HepG2 (cell line): ENCODE measurements at regions of chr9 and their contacts with region 1.

Region 1: DNA sequence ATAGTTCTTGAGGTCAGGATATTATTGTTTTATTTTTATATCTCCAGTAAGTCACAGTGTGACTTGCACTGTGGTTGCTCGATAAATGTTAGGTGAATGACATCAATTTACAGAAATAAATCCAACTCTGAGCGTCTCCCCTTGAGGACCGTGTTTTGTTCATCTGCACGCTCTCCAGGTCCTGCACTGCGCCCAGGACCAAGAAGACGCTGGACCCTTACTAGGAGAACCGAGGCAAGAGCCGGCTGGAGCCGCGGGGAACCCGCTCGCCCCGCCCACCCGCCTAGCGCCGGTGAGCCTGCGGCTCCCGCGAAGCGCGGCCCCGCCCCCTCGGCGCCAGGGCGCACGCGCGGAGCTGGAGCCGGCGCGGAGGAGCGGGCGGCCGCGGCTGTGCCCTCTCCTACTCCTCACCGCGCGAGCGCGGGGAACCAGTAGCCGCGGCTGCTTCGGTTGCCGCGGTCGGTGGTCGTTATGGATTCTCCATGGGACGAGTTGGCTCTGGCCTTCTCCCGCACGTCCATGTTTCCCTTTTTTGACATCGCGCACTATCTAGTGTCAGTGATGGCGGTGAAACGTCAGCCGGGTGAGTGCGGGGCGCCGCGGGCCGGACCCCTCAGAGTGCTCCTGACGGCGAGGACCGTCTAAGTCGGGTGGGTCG is at the start of gene TMEM38B:
- DNase-seq: peak; percentile 50
- ATAC-seq: peak; percentile 93
- H3K4me3 ChIP-seq: peak within 1 kb of the TSS; percentile 77 to 92 (median 82)
- H3K27ac ChIP-seq: peak within 1 kb of the TSS; percentile 43
- H3K4me1 ChIP-seq: peaks cover 31% of the 10 kb centered on the region
- H3K27me3 ChIP-seq: no peaks in the 10 kb centered on the region; a peak in 1 of 5 replicates
- CTCF ChIP-seq: no peak
- EP300 ChIP-seq: no peak
- POLR2A ChIP-seq: peak; percentile 55 to 74; a peak in 3 of 4 replicates
- RAD21 ChIP-seq: no peak
- total RNA-seq, gene TMEM38B: 26.0 and 32.4 TPM in 2 replicates

Region 2: GRCh38 chr9:105656131-105656921 is 38.0 kb before region 1 on chr9:
- CTCF ChIA-PET with region 1: no interaction called
- POLR2A ChIA-PET with region 1: no interaction called
- in situ Hi-C with region 1: no loop called
- intact Hi-C with region 1: loop called (anchors 2 kb)
- DNase-seq: no peak
- ATAC-seq: peak; percentile 95
- H3K4me3 ChIP-seq: peak overlapping the region; percentile 57 to 77 (median 64); a peak in 5 of 6 replicates
- H3K27ac ChIP-seq: no peak overlapping the region
- H3K4me1 ChIP-seq: peaks cover 16% of the 10 kb centered on the region
- H3K27me3 ChIP-seq: peaks cover 6 to 22% of the 10 kb centered on the region in 2 experiments; a peak in 4 of 5 replicates
- CTCF ChIP-seq: peak; percentile 74
- EP300 ChIP-seq: no peak
- POLR2A ChIP-seq: no peak
- RAD21 ChIP-seq: peak; percentile 75

Region 3: GRCh38 chr9:106025453-106025852 is 331.1 kb after region 1 on chr9:
- CTCF ChIA-PET with region 1: no interaction called
- POLR2A ChIA-PET with region 1: no interaction called
- in situ Hi-C with region 1: no loop called
- intact Hi-C with region 1: no loop called
- DNase-seq: no peak
- ATAC-seq: peak; percentile 60
- H3K4me3 ChIP-seq: no peak overlapping the region
- H3K27ac ChIP-seq: no peak overlapping the region
- H3K4me1 ChIP-seq: no peaks in the 10 kb centered on the region
- H3K27me3 ChIP-seq: no peaks in the 10 kb centered on the region
- CTCF ChIP-seq: no peak
- EP300 ChIP-seq: no peak
- POLR2A ChIP-seq: no peak
- RAD21 ChIP-seq: no peak